MCF 10A (cell line): ENCODE measurements at regions of chr3 and their contacts with region 1.

Region 1: GRCh38 chr3:21170964-21171363 is 580.0 kb downstream of the ZNF385D start:
- DNase-seq: peak; percentile 34
- H3K4me3 Mint-ChIP-seq: no peak overlapping the region
- H3K27ac Mint-ChIP-seq: no peak overlapping the region
- H3K4me1 Mint-ChIP-seq: peaks cover 9% of the 10 kb centered on the region
- H3K27me3 Mint-ChIP-seq: no peaks in the 10 kb centered on the region
- CTCF ChIP-seq: peak; percentile 41

Region 2: GRCh38 chr3:21142949-21143348 is 28.0 kb before region 1 on chr3:
- CTCF ChIA-PET with region 1: no interaction called
- POLR2A ChIA-PET with region 1: no interaction called
- intact Hi-C with region 1: loop called (anchors 1 kb)
- DNase-seq: no peak
- H3K4me3 Mint-ChIP-seq: no peak overlapping the region
- H3K27ac Mint-ChIP-seq: no peak overlapping the region
- H3K4me1 Mint-ChIP-seq: no peaks in the 10 kb centered on the region
- H3K27me3 Mint-ChIP-seq: no peaks in the 10 kb centered on the region
- CTCF ChIP-seq: no peak